CD14-positive monocyte (primary cell): ENCODE measurements at regions of chr19 and their contacts with region 1.

Region 1: DNA sequence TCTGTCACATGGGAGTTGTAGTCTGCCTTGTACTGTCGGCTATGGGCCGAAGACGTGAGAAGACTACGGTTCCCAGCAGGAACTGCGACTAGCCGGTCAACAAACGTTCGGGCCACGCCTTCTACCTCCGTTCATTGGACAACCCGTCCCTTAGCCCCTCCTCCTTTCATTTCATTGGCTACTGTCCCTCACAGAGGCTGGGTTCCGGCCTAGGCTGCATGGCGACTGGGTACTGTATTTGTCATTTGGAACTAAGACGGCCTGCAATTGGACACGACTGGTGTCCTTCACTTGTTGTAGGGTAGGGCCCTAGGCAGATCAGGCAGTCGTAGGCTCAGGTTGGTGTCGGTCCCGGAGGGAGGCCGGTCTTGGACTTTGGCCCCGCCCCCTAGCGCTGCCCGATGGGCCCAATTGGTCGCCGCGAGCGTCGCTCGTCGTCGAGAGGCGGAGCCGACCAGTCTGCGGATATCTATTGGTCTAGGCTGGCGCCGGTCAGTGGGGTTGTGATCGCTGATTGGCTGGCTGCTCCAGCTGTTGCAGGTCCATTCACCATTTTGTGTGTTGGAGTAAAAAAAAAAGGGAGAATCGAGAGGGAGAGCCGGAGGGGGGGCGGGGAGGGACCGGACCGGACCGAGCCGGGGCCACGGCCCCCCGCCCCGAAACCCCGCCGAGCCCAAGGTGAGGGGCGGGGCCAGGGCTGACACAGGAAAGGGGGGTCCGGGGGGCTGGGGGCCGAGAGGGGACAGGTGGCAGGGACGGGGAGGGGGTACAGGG is at the start of gene CIC:
- DNase-seq: peak; percentile 100
- H3K4me3 ChIP-seq: peak within 1 kb of the TSS; percentile 73 to 88 (median 76)
- H3K4me3 Mint-ChIP-seq: peak within 1 kb of the TSS; percentile 84 to 95
- H3K27ac ChIP-seq: peak within 1 kb of the TSS; percentile 90 to 99
- H3K27ac Mint-ChIP-seq: peak within 1 kb of the TSS in 4 of 7 donors; percentile 98 to 99 (median 99)
- H3K4me1 ChIP-seq: peaks cover 30 to 35% of the 10 kb centered on the region in 2 donors
- H3K4me1 Mint-ChIP-seq: peaks cover 29% of the 10 kb centered on the region
- H3K27me3 ChIP-seq: no peaks in the 10 kb centered on the region
- H3K27me3 Mint-ChIP-seq: peaks cover 0 to 1% (median 1%) of the 10 kb centered on the region in 3 donors
- CTCF ChIP-seq: no peak
- polyA plus RNA-seq, gene CIC: 0.62 to 42.2 (median 0.87) TPM

Region 2: DNA sequence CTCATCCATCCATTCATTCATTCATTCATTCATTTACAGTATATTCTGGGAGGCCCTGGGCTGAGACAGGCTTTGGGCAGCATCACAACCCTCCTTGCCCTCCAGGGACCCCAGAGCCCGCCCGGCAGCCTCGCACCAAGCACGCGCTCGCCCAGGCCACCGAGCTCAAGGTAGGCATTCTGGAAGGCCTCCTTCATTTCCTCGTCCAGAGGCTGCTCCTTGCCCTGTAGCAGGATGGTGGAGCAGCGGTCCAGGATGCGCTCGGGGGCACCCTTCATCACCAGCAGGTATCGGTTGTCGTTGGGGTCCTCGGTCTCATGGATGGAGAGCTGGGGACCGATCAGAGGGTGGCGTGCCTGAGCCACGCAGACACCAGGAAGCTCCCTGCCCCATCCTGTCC is 290.4 kb before region 1 on chr19:
- intact Hi-C with region 1: no loop called
- DNase-seq: no peak
- H3K4me3 ChIP-seq: no peak overlapping the region
- H3K4me3 Mint-ChIP-seq: no peak overlapping the region
- H3K27ac ChIP-seq: no peak overlapping the region
- H3K27ac Mint-ChIP-seq: peak overlapping the region in 1 of 7 donors; percentile 66
- H3K4me1 ChIP-seq: no peaks in the 10 kb centered on the region
- H3K4me1 Mint-ChIP-seq: no peaks in the 10 kb centered on the region
- H3K27me3 ChIP-seq: no peaks in the 10 kb centered on the region
- H3K27me3 Mint-ChIP-seq: peaks cover 0 to 3% (median 1%) of the 10 kb centered on the region in 3 donors
- CTCF ChIP-seq: no peak

Region 3: DNA sequence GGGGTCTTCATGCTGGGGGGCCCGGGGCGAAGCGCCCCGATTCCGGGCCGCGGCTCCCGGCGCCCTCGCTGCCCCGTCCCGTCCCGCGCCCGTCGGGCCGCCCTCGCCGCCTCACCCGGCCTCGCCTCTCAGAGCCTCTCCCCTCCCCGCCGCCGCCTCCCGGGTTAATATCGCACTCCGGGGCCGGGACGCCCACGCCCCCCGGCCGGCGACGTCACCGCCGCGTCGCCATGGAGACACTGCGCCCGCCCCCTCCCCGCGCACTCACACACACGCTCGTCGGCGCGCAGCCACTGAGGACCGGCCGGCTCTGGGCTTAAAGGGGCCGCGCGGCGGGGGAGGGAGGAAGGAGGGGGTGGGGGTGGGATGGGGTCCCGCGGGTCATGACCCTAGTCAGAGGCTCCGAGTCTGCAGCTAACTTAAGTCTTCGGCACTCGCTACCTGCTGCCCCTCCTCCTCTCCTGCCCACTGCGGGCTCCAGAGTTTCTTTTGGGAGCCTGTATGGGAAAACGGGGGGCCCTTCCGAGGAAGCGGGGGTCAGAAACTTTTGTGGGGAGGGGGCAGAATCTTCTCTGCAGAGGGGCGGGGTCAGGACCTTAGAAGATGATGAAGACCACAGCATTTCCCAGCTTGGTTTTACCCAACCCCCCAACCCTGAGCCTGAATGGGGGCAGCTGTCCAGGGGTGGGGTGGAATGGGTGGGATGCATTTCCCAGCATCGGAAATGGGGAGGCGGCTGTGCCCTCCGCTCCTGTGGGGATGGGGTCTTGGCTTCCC is 13.7 kb before region 1 on chr19 and contains the start of gene ERF:
- intact Hi-C with region 1: loop called (anchors 2 kb)
- DNase-seq: peak; percentile 80 to 90 (median 89)
- H3K4me3 ChIP-seq: peak within 1 kb of the TSS; percentile 79 to 99 (median 99)
- H3K4me3 Mint-ChIP-seq: peak within 1 kb of the TSS; percentile 84 to 93
- H3K27ac ChIP-seq: peak within 1 kb of the TSS; percentile 85 to 88
- H3K27ac Mint-ChIP-seq: peak within 1 kb of the TSS; percentile 57 to 92 (median 77)
- H3K4me1 ChIP-seq: peaks cover 40 to 47% of the 10 kb centered on the region in 2 donors
- H3K4me1 Mint-ChIP-seq: peaks cover 39% of the 10 kb centered on the region
- H3K27me3 ChIP-seq: peaks cover 3 to 14% of the 10 kb centered on the region in 2 donors
- H3K27me3 Mint-ChIP-seq: peaks cover 15 to 33% (median 24%) of the 10 kb centered on the region in 3 donors
- CTCF ChIP-seq: no peak
- polyA plus RNA-seq, gene ERF: 2.3 to 42.6 (median 3.4) TPM

Region 4: GRCh38 chr19:42363614-42364346 is 94.9 kb after region 1 on chr19:
- intact Hi-C with region 1: no loop called
- DNase-seq: peak; percentile 42 to 50 (median 44)
- H3K4me3 ChIP-seq: no peak overlapping the region
- H3K4me3 Mint-ChIP-seq: peak overlapping the region in 1 of 2 donors; percentile 31
- H3K27ac ChIP-seq: peak overlapping the region; percentile 15 to 69
- H3K27ac Mint-ChIP-seq: peak overlapping the region; percentile 20 to 82 (median 73)
- H3K4me1 ChIP-seq: peaks cover 14 to 18% of the 10 kb centered on the region in 2 donors
- H3K4me1 Mint-ChIP-seq: peaks cover 14% of the 10 kb centered on the region
- H3K27me3 ChIP-seq: no peaks in the 10 kb centered on the region
- H3K27me3 Mint-ChIP-seq: peaks cover 0 to 1% (median 0%) of the 10 kb centered on the region in 3 donors
- CTCF ChIP-seq: no peak